WTC11 (cell line): ENCODE measurements at regions of chr15 and their contacts with region 1.

Region 1: DNA sequence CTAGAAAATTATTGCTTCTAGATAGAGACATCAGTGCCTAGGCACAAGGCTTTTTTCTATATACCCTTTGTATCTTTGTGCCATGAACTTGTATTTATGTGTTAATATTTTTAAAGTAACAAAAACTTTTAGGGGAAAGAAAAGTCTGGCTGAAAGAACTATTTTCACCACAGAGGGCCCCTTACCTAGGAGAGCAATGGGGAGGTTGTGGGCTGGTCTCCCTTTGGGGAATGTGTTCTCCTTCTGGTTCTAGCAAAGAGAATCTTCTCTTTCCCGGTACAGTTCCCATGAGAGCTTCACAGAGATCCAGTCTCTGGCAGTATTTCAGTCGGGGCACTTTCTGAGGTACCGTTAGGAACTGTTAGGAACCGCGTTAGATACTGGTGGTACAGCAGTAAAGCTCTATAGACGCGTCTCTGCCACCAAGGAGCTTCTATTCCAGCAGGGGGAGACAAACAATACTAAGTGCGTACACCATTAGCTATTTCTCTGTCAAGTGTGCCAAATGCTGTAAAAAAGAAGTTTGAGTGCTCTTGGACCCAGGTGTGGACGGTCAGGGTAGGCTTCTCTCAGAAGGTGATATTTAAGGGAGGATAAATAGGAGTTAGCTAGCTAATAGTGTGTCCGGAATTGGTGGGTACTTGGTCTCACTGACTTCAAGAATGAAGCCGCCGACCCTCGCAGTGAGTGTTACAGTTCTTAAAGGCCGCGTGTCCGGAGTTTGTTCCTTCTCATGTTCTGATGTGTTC is 4.6 kb upstream of the EPB42 start:
- DNase-seq: peak; percentile 40
- ATAC-seq: peak; percentile 96
- H3K4me3 Mint-ChIP-seq: no peak overlapping the region
- H3K27ac Mint-ChIP-seq: no peak overlapping the region
- H3K4me1 Mint-ChIP-seq: no peaks in the 10 kb centered on the region
- H3K27me3 Mint-ChIP-seq: no peaks in the 10 kb centered on the region; the same call in 1 of the 2 replicates
- CTCF ChIP-seq: peak; percentile 55; the same call in 1 of the 2 replicates

Region 2: DNA sequence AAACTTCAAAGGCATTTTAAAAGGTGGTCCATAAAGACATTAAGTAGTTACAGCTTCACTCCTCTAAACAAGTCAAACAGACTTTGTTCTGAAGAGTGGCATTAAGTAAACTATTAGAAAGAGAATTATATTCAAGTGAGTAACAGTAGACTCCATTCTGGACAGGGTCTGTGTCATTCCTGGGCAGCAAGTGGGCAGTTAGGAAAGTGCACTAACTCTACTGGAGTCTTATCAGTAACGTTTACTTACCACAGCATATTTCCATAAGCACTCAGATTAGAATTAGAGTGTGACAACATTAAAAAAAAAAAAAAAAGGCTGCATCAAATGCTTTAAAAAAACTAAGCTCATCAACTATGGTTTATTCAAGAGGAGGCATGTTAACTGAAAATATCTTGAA is 130.1 kb before region 1 on chr15:
- CTCF ChIA-PET with region 1: no interaction called
- POLR2A ChIA-PET with region 1: no interaction called
- DNase-seq: no peak
- ATAC-seq: no peak
- H3K4me3 Mint-ChIP-seq: no peak overlapping the region
- H3K27ac Mint-ChIP-seq: 0 out of 2 replicates have a peak overlapping the region, but pooled peaks have one; percentile 43
- H3K4me1 Mint-ChIP-seq: no peaks in the 10 kb centered on the region
- H3K27me3 Mint-ChIP-seq: no peaks in the 10 kb centered on the region
- CTCF ChIP-seq: no peak

Region 3: DNA sequence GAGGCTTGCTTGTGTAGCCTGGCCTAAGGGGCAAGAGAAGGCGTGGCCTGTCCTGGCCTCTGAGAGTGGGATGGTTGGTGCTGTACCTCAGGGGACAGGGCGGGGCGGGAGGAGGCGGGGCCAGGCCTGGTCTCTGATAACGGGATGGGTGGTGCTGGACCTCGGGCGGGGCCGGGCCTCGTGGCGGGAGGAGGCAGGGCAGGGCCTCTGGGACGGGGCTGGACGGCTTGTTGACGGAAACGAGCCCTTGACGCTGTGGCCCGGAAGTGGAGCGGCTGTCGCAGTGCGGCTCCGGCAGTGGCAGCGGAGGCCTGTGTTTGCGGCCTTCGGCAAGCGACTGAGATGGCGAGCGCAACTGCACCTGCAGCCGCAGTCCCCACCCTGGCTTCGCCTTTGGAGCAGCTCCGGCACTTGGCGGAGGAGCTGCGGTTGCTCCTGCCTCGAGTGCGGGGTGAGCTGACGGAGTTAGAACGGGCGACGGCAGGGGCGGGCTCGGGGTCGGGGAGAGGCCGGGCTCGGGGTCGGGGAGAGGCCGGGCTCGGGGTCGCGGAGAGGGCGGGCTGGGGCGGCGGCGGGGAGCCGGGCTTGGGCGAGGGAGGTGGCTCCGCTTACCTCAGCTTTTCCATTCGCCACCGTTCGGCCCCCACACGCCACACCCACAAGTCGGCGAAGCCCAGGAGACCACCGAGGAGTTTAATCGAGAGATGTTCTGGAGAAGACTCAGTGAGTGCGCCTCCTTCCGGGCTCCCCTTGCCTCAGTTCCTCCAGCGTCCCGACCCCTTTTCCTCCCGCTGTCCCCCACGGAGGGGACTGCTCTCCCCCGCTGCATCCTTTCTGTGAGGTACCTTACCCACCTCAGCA is 40.0 kb before region 1 on chr15 and contains the start of gene CCNDBP1:
- CTCF ChIA-PET with region 1: interaction called, 10 read pairs
- POLR2A ChIA-PET with region 1: no interaction called
- DNase-seq: peak; percentile 99
- ATAC-seq: peak; percentile 96
- H3K4me3 Mint-ChIP-seq: peak within 1 kb of the TSS; percentile 96
- H3K27ac Mint-ChIP-seq: peak within 1 kb of the TSS; percentile 90
- H3K4me1 Mint-ChIP-seq: peaks cover 13% of the 10 kb centered on the region
- H3K27me3 Mint-ChIP-seq: no peaks in the 10 kb centered on the region
- CTCF ChIP-seq: no peak; the same call in 1 of the 2 replicates
- total RNA-seq, gene CCNDBP1: 19.1 to 22.0 TPM (median 20.4 TPM) in 3 replicates

Region 4: DNA sequence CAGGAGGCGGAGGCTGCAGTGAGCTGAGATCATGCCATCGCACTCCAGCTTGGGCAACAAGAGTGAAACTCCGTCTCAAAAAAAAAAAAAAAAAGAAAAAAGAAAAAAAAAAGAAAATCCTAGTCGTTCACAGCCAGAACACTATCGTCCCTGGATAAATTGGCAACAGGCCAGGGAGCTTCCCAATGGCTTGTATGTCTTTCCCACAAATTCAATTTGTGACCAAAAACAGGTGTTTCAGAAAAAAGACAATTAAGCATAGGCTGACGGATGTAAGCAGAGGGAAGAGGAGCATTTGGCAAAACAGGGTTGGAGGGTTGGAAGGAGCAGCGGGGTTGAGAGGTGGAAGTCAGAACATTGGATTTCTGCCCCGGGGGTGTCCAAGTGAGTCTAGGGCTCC is 13.1 kb before region 1 on chr15:
- CTCF ChIA-PET with region 1: interaction called, 18 read pairs
- POLR2A ChIA-PET with region 1: no interaction called
- DNase-seq: no peak
- ATAC-seq: no peak
- H3K4me3 Mint-ChIP-seq: no peak overlapping the region
- H3K27ac Mint-ChIP-seq: no peak overlapping the region
- H3K4me1 Mint-ChIP-seq: peaks cover 13% of the 10 kb centered on the region
- H3K27me3 Mint-ChIP-seq: no peaks in the 10 kb centered on the region
- CTCF ChIP-seq: no peak

Region 5: DNA sequence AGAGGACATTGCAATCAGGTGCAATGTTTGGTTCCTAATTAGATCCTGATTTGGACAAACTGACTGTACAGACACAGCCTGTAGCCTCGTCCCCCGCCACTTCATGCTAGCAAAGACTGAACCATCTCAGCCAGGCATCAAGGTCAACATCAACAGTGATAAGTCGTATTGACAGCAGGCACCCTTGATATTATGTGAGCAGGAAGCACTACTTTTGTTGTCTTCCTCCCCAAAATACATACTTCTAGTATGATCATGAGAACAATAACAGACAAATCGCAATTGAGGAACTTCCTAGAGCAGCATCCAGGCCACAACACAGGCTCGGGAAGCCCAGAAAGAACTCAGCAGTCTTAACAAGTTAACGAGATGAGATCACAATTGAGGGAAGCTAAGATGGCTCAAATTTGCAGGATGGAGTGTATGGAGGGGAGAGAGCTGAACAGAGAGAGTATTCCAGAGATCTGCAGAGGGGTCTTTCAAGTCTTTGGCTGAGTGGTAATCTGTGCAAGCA is 20.9 kb after region 1 on chr15:
- CTCF ChIA-PET with region 1: interaction called, 15 read pairs
- POLR2A ChIA-PET with region 1: no interaction called
- DNase-seq: no peak
- ATAC-seq: no peak
- H3K4me3 Mint-ChIP-seq: no peak overlapping the region
- H3K27ac Mint-ChIP-seq: no peak overlapping the region
- H3K4me1 Mint-ChIP-seq: no peaks in the 10 kb centered on the region
- H3K27me3 Mint-ChIP-seq: peaks cover 3% of the 10 kb centered on the region
- CTCF ChIP-seq: no peak

Region 6: GRCh38 chr15:43260011-43260615 is 34.7 kb after region 1 on chr15:
- CTCF ChIA-PET with region 1: interaction called, 89 read pairs
- POLR2A ChIA-PET with region 1: no interaction called
- DNase-seq: no peak
- ATAC-seq: no peak
- H3K4me3 Mint-ChIP-seq: no peak overlapping the region
- H3K27ac Mint-ChIP-seq: no peak overlapping the region
- H3K4me1 Mint-ChIP-seq: no peaks in the 10 kb centered on the region
- H3K27me3 Mint-ChIP-seq: no peaks in the 10 kb centered on the region; the same call in 1 of the 2 replicates
- CTCF ChIP-seq: no peak

Region 7: GRCh38 chr15:43285609-43286037 is 60.2 kb after region 1 on chr15:
- CTCF ChIA-PET with region 1: interaction called, 101 read pairs
- POLR2A ChIA-PET with region 1: no interaction called
- DNase-seq: peak; percentile 36
- ATAC-seq: peak; percentile 73
- H3K4me3 Mint-ChIP-seq: no peak overlapping the region
- H3K27ac Mint-ChIP-seq: no peak overlapping the region
- H3K4me1 Mint-ChIP-seq: no peaks in the 10 kb centered on the region
- H3K27me3 Mint-ChIP-seq: peaks cover 2% of the 10 kb centered on the region
- CTCF ChIP-seq: peak; percentile 63